Endothelial cell of umbilical vein (primary cell): ENCODE measurements at regions of chr9 and their contacts with region 1.

Region 1: DNA sequence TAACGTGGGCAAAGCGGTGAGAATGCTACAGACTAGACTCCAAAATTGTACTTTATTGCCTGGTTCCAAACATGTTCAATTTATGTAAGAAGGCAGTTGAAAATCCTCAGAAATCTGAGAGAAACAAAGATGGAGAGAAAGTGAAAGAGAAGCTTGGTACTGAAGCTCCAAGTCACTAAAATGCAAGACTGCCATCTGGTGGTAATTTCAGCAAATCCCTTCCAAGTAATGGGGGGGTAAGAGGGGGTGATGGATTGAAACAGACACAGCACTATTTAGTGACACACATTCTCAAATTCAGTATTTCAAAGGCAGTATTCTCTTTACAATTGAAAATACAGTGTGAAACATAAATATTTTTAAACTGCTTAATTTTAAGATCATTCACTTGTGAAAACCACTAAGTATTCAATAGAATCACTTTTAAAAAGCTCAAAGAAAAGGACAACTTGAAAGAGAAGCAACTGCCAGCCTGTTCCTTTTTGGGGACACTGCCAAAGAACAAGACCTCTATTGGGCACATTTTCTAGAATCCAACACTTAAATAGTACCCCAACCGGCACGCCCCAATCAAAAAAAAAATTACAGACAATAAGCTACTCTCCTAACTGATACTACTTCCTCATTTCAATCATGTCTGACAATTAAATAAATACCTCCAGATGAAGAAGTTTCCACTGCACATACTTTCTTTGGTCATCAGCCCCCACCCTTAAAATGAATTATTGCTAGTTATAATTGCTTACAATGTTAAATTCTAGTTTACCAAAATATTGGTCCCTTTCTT is 131.5 kb downstream of the AGTPBP1 start:
- DNase-seq: peak; percentile 74
- H3K4me3 ChIP-seq: peak overlapping the region in 1 of 3 experiments; percentile 15
- H3K27ac ChIP-seq: no peak overlapping the region
- H3K4me1 ChIP-seq: peaks cover 2% of the 10 kb centered on the region
- H3K27me3 ChIP-seq: no peaks in the 10 kb centered on the region
- CTCF ChIP-seq: peak; percentile 68 to 76
- POLR2A ChIP-seq: no peak

Region 2: GRCh38 chr9:84668196-84669012 is 941.9 kb before region 1 on chr9:
- CTCF ChIA-PET with region 1: interaction called, 14 read pairs
- POLR2A ChIA-PET with region 1: no interaction called
- dilution Hi-C with region 1: no loop called
- intact Hi-C with region 1: loop called (anchors 1 kb)
- DNase-seq: peak; percentile 52
- H3K4me3 ChIP-seq: peak overlapping the region in 2 of 3 experiments; percentile 29 to 40
- H3K27ac ChIP-seq: no peak overlapping the region
- H3K4me1 ChIP-seq: peaks cover 15% of the 10 kb centered on the region
- H3K27me3 ChIP-seq: peaks cover 32 to 62% of the 10 kb centered on the region in 2 experiments
- CTCF ChIP-seq: peak; percentile 59 to 60
- POLR2A ChIP-seq: no peak

Region 3: GRCh38 chr9:84953797-84954705 is 656.2 kb before region 1 on chr9:
- CTCF ChIA-PET with region 1: interaction called, 8 read pairs
- POLR2A ChIA-PET with region 1: no interaction called
- dilution Hi-C with region 1: no loop called
- intact Hi-C with region 1: loop called (anchors 1 kb)
- DNase-seq: peak; percentile 67
- H3K4me3 ChIP-seq: no peak overlapping the region
- H3K27ac ChIP-seq: no peak overlapping the region
- H3K4me1 ChIP-seq: no peaks in the 10 kb centered on the region
- H3K27me3 ChIP-seq: no peaks in the 10 kb centered on the region
- CTCF ChIP-seq: peak; percentile 95 to 97
- POLR2A ChIP-seq: no peak

Region 4: GRCh38 chr9:85425153-85425611 is 185.1 kb before region 1 on chr9:
- CTCF ChIA-PET with region 1: interaction called, 28 read pairs
- POLR2A ChIA-PET with region 1: no interaction called
- dilution Hi-C with region 1: no loop called
- intact Hi-C with region 1: loop called (anchors 1 kb)
- DNase-seq: peak; percentile 84
- H3K4me3 ChIP-seq: no peak overlapping the region
- H3K27ac ChIP-seq: no peak overlapping the region
- H3K4me1 ChIP-seq: peaks cover 26% of the 10 kb centered on the region
- H3K27me3 ChIP-seq: no peaks in the 10 kb centered on the region
- CTCF ChIP-seq: peak; percentile 74 to 78
- POLR2A ChIP-seq: no peak

Region 5: GRCh38 chr9:85508616-85509015 is 101.7 kb before region 1 on chr9:
- CTCF ChIA-PET with region 1: interaction called, 26 read pairs
- POLR2A ChIA-PET with region 1: no interaction called
- dilution Hi-C with region 1: no loop called
- intact Hi-C with region 1: loop called (anchors 1 kb)
- DNase-seq: no peak
- H3K4me3 ChIP-seq: no peak overlapping the region
- H3K27ac ChIP-seq: no peak overlapping the region
- H3K4me1 ChIP-seq: no peaks in the 10 kb centered on the region
- H3K27me3 ChIP-seq: no peaks in the 10 kb centered on the region
- CTCF ChIP-seq: no peak
- POLR2A ChIP-seq: no peak

Region 6: DNA sequence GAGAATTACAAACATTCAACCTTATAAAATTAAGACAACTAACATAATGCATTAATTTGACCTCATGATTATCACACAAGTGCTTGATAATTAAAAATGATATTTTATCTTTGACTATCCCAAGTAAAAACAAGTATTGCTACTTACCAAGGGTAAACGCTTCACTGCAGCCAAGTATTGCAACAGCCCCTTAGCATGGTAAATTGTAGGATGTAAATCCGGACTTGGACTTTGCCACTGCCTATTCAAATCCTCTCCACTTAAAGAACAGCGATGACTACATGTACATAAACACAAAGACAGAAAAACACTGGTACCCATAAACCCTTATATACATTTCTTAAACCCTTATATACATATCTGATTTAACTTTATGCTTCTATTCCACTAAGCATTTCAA is 23.6 kb before region 1 on chr9:
- CTCF ChIA-PET with region 1: interaction called, 16 read pairs
- POLR2A ChIA-PET with region 1: no interaction called
- dilution Hi-C with region 1: no loop called
- intact Hi-C with region 1: no loop called
- DNase-seq: no peak
- H3K4me3 ChIP-seq: no peak overlapping the region
- H3K27ac ChIP-seq: no peak overlapping the region
- H3K4me1 ChIP-seq: no peaks in the 10 kb centered on the region
- H3K27me3 ChIP-seq: no peaks in the 10 kb centered on the region
- CTCF ChIP-seq: no peak
- POLR2A ChIP-seq: no peak